H1 (cell line): ENCODE measurements at regions of chr17 and their contacts with region 1.

Region 1: GRCh38 chr17:44533533-44534246 is 23.6 kb upstream of the FZD2 start:
- DNase-seq: peak in 1 of 2 experiments; percentile 97
- H3K4me3 ChIP-seq: no peak overlapping the region
- H3K27ac ChIP-seq: no peak overlapping the region
- H3K4me1 ChIP-seq: peaks cover 0 to 15% (median 10%) of the 10 kb centered on the region in 4 experiments; a peak in 6 of 7 replicates
- H3K27me3 ChIP-seq: peaks cover 3 to 27% (median 13%) of the 10 kb centered on the region in 4 experiments
- CTCF ChIP-seq: peak; percentile 92 to 97 (median 96)
- EP300 ChIP-seq: no peak
- POLR2A ChIP-seq: no peak
- RAD21 ChIP-seq: peak; percentile 99 to 100

Region 2: GRCh38 chr17:44556832-44557606 is 23.3 kb after region 1 on chr17 and contains the start of gene FZD2:
- CTCF ChIA-PET with region 1: interaction called, 68 read pairs
- POLR2A ChIA-PET with region 1: interaction called, 219 read pairs
- DNase-seq: peak; percentile 93 to 94
- H3K4me3 ChIP-seq: peak within 1 kb of the TSS; percentile 53 to 78 (median 75)
- H3K27ac ChIP-seq: peak within 1 kb of the TSS; percentile 82
- H3K4me1 ChIP-seq: peaks cover 4 to 23% (median 19%) of the 10 kb centered on the region in 4 experiments
- H3K27me3 ChIP-seq: peaks cover 7 to 36% (median 27%) of the 10 kb centered on the region in 4 experiments; a peak in 6 of 7 replicates
- CTCF ChIP-seq: no peak
- EP300 ChIP-seq: peak in 1 of 2 experiments; percentile 61; a peak in 1 of 3 replicates
- POLR2A ChIP-seq: peak; percentile 35 to 79
- RAD21 ChIP-seq: peak; percentile 14 to 19; a peak in 3 of 4 replicates
- total RNA-seq, gene FZD2: 17.0 and 17.6 TPM in 2 replicates

Region 3: GRCh38 chr17:44581868-44582267 is 48.2 kb after region 1 on chr17:
- CTCF ChIA-PET with region 1: interaction called, 50 read pairs
- POLR2A ChIA-PET with region 1: no interaction called
- DNase-seq: no peak
- H3K4me3 ChIP-seq: no peak overlapping the region
- H3K27ac ChIP-seq: no peak overlapping the region
- H3K4me1 ChIP-seq: no peaks in the 10 kb centered on the region; a peak in 1 of 7 replicates
- H3K27me3 ChIP-seq: 0 out of 7 replicates have a peak, but pooled peaks cover 0 to 2% (median 1%) of the 10 kb centered on the region in 4 experiments
- CTCF ChIP-seq: peak; percentile 36 to 51 (median 41); a peak in 3 of 4 replicates
- EP300 ChIP-seq: no peak
- POLR2A ChIP-seq: no peak
- RAD21 ChIP-seq: peak; percentile 36 to 56; a peak in 3 of 4 replicates

Region 4: DNA sequence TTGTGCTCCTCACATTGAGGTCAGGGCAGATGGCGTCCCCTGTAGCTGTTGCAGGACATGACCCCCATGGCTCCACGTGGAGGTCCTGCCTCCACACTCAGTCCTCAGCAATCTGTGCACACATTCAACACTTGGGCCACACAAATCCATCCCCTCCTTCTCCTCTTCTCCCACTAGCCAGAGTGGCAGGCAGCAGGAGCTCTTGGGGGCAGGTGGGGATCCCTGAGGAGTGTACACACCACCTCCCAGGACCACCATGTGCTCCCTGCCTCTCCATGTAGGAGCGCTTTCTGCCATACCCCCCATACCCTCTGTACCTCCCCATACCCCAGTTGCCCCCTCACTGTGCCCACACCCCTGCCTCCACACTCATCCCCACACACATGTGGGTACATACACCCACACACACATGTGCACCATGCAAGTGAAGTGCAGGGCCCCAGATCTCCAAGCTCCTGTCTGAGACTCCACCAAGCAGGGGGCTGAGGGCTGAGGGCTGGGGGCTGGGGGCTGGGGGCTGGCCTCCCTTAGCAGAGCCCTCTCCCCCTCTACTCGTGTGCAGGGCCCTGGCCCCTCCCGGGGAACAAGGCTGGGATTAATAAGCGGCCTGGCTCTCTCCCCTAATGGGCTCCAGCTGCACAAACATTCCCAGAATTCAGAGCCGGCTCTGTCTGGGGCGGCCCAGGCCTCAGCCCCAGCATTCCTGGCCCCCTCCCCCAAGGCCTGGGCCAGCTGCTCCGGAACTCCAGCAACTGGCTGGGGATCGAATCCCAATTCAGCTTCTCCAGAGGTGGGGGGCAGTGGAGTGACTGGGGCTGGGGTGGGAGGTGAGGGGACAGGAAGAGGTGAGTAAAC is 74.4 kb after region 1 on chr17:
- CTCF ChIA-PET with region 1: interaction called, 13 read pairs
- POLR2A ChIA-PET with region 1: interaction called, 3 read pairs
- DNase-seq: peak in 1 of 2 experiments; percentile 31
- H3K4me3 ChIP-seq: no peak overlapping the region
- H3K27ac ChIP-seq: no peak overlapping the region; the same call in 1 of the 2 replicates
- H3K4me1 ChIP-seq: peaks cover 4 to 16% (median 12%) of the 10 kb centered on the region in 4 experiments
- H3K27me3 ChIP-seq: no peaks in the 10 kb centered on the region
- CTCF ChIP-seq: no peak
- EP300 ChIP-seq: no peak
- POLR2A ChIP-seq: no peak
- RAD21 ChIP-seq: no peak; a peak in 1 of 4 replicates

Region 5: DNA sequence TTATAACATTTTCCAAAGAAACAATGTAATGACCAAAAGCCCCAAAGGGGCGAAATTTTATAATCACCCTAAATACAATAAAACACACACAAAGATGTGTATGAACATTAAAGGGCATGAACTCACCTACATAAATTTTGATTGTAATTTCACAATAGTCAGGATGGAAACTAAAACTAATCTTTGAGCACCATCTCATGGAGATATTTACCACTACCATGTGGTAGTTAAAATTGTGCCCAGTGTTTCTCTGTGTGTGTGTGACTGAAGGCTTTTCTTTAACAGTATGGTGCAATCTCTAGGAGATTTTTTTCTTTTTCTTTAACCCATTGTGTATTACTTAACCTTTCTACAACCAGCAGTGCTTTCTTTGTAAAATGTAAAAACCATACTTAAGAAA is 102.9 kb after region 1 on chr17:
- CTCF ChIA-PET with region 1: interaction called, 84 read pairs
- POLR2A ChIA-PET with region 1: interaction called, 3 read pairs
- DNase-seq: no peak
- H3K4me3 ChIP-seq: no peak overlapping the region
- H3K27ac ChIP-seq: no peak overlapping the region
- H3K4me1 ChIP-seq: 0 out of 7 replicates have a peak, but pooled peaks cover 0 to 2% (median 0%) of the 10 kb centered on the region in 4 experiments
- H3K27me3 ChIP-seq: no peaks in the 10 kb centered on the region
- CTCF ChIP-seq: peak in 2 of 3 experiments; percentile 11 to 16; a peak in 2 of 4 replicates
- EP300 ChIP-seq: no peak
- POLR2A ChIP-seq: no peak
- RAD21 ChIP-seq: peak; percentile 68 to 70

Region 6: DNA sequence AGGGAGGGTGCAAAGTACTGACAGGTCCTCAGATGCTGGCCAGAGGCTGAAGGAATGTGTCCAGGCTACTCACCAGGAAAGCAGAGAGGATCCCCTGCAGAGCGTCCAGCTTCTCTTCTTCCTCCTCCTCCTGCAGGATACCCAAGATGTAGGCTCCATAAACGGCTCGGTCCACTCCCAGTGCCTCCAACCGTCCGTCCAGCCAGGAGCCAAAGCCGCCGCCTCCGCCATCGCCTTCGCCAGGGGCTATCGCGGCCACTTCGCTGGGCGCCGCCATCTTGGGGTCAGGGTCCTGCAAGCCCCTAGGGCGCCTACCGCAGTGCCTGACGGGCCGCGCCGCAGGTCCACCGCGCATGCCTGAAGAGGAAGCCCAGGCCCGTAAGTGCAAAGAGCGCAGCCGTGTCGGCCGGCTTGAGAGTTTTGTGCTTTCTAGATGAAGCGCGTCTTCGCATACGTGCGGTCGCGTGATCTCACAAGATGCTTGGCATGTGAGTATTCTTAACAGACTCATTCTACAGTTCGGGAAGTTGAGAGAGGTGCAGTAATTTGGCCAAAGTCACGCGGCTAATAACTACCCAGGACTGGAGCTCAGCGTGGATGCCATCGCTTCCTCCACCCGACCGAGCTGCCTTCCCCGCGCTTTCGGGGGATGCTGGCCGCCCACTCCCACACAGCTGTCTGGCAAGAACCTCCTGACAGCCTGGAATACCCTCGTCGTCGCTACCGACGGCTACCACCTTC is 156.0 kb after region 1 on chr17 and contains the start of gene CCDC43:
- CTCF ChIA-PET with region 1: interaction called, 12 read pairs
- POLR2A ChIA-PET with region 1: interaction called, 3 read pairs
- DNase-seq: peak; percentile 75 to 97
- H3K4me3 ChIP-seq: peak within 1 kb of the TSS; percentile 97 to 100 (median 98)
- H3K27ac ChIP-seq: peak within 1 kb of the TSS; percentile 92
- H3K4me1 ChIP-seq: no peaks in the 10 kb centered on the region; a peak in 1 of 7 replicates
- H3K27me3 ChIP-seq: no peaks in the 10 kb centered on the region
- CTCF ChIP-seq: no peak
- EP300 ChIP-seq: 0 out of 3 replicates have a peak, but pooled peaks of 1 of the 2 experiments have one; percentile 12
- POLR2A ChIP-seq: peak; percentile 96 to 97
- RAD21 ChIP-seq: peak in 1 of 2 experiments; percentile 8; a peak in 1 of 4 replicates
- total RNA-seq, gene CCDC43: 33.2 and 38.1 TPM in 2 replicates